Psoas muscle (tissue), 8 donors: ENCODE measurements at regions of chr11 and their contacts with region 1.

Region 1: DNA sequence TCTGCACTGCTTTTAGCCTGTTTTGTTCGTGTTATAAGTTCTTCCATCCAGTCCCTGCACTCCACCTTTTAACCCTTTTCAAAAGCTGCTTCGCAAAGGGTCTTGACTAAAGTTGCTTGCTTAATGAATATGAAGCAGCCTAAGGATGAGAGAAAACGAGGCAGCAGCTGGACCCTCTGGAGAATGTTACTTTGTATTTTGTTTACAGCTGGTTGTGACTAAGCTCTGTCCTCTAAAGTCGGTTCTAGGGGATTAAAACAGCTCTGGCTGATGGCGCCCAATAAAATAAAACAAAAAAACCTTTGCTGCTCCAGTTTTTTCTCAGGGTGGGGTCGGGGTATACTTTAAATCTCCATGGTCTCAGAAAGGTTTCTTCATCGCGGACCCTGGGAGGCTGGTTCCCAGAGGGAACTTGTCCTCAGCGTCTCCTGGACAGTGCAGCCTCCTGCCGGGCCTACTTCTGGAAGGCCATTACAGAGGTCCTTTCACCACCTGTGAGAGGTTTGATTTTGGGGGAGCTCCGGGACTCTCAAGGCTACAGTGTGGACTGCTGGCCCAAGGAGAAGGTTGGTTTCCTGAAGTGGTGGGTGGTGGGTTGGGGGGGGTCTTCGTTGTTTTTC is 836 bp upstream of the RBM4 start:
- DNase-seq: no peak
- ATAC-seq: peak; percentile 6 to 25 (median 14)
- H3K4me3 ChIP-seq: peak overlapping the region; percentile 87
- H3K27ac ChIP-seq: peak overlapping the region; percentile 91
- H3K4me1 ChIP-seq: peaks cover 38% of the 10 kb centered on the region
- H3K27me3 ChIP-seq: no peaks in the 10 kb centered on the region
- CTCF ChIP-seq: no peak

Region 2: GRCh38 chr11:66545701-66546367 is 91.8 kb before region 1 on chr11 and contains the start of gene ZDHHC24:
- intact Hi-C with region 1: no loop called
- DNase-seq: peak; percentile 99
- ATAC-seq: peak; percentile 90 to 93 (median 92)
- H3K4me3 ChIP-seq: peak within 1 kb of the TSS; percentile 83
- H3K27ac ChIP-seq: peak within 1 kb of the TSS; percentile 89
- H3K4me1 ChIP-seq: peaks cover 33% of the 10 kb centered on the region
- H3K27me3 ChIP-seq: no peaks in the 10 kb centered on the region
- CTCF ChIP-seq: no peak
- total RNA-seq, gene ZDHHC24: 3.9 to 6.5 (median 5.2) TPM

Region 3: DNA sequence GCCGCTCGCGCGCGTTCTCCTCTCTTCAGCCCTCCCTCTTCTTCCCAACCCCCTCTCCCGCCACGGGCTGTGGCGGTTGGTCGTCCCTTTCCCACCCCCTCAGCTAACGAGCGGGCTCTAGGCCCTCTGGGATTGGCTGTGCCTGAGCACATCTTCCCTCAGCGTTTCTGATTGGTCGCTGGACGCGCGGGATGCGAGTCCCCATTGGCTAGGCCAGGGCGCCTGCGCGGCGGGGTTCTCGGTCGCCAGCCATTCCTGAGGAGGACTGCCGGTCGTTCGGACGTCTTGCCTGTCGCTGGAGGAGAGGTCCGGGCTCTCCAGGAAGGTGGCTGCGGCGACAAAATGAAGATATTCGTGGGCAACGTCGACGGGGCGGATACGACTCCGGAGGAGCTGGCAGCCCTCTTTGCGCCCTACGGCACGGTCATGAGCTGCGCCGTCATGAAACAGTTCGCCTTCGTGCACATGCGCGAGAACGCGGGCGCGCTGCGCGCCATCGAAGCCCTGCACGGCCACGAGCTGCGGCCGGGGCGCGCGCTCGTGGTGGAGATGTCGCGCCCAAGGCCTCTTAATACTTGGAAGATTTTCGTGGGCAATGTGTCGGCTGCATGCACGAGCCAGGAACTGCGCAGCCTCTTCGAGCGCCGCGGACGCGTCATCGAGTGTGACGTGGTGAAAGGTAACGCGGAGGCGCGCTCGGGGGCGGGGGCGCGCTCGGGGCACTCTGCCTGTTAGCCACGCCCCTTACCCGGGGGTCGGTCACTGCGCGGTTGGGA is 21.1 kb before region 1 on chr11 and contains the start of gene RBM14:
- intact Hi-C with region 1: loop called in 1 of 2 experiments (anchors 2 kb)
- DNase-seq: peak; percentile 99 to 100
- ATAC-seq: peak; percentile 95 to 99 (median 98)
- H3K4me3 ChIP-seq: peak within 1 kb of the TSS; percentile 98
- H3K27ac ChIP-seq: peak within 1 kb of the TSS; percentile 99
- H3K4me1 ChIP-seq: peaks cover 40% of the 10 kb centered on the region
- H3K27me3 ChIP-seq: no peaks in the 10 kb centered on the region
- CTCF ChIP-seq: no peak
- total RNA-seq, gene RBM14: 21.1 to 39.3 (median 34.0) TPM